ENCODE measurements at regions of chr6 and their contacts with region 1.

Region 1: DNA sequence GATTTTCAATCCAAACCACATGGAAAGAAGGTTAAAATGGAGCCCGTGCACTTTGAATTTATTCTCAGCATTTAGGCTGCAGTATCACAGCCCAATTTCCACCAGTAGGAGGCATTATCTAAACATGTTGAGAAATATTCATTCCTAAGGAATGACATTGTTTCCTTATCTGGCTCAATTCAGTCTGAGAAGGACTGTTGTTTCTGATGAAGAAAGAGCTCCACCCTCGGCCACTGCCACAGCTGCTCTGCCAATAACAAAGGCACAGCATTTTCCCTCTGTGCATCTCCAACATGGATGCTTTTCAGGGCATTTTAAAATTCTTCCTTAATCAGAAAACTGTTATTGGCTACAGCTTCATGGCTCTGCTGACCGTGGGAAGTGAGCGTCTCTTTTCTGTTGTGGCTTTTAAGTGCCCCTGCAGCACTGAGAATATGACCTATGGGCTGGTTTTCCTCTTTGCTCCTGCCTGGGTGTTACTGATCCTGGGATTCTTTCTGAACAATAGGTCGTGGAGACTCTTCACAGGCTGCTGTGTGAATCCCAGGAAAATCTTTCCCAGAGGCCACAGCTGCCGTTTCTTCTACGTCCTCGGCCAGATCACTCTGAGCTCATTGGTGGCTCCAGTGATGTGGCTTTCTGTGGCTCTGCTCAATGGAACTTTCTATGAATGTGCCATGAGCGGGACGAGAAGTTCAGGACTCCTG is at the start of gene CALHM5:
- H3K4me3 ChIP-seq: peak within 1 kb of the TSS; percentile 27
- H3K27ac ChIP-seq: peak within 1 kb of the TSS; percentile 28
- H3K4me1 ChIP-seq: peaks cover 13% of the 10 kb centered on the region
- CTCF ChIP-seq: peak; percentile 50

Region 2: GRCh38 chr6:116492331-116493067 is 19.1 kb before region 1 on chr6:
- CTCF ChIA-PET with region 1: interaction called, 20 read pairs
- POLR2A ChIA-PET with region 1: no interaction called
- H3K4me3 ChIP-seq: no peak overlapping the region
- H3K27ac ChIP-seq: no peak overlapping the region
- H3K4me1 ChIP-seq: no peaks in the 10 kb centered on the region
- CTCF ChIP-seq: no peak

Region 3: DNA sequence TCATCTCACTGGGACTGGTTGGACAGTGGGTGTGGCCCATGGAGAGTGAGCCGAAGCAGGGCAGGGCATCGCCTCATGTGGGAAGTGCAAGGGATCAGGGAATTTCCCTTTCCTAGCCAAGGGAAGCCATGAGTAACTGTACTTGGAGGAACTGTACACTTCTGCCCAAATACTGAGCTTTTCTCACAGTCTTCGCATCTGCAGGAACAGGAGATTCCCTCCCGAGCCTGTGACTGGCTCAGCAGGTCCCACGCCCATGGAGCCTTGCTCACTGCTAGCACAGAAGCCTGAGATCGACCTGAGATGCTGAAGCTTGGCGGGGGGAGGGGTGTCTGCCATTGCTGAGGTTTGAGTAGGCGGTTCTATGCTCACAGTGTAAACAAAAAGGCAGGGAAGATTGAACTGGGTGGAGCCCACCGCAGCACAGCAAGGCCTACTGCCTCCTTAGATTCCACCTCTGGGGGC is 10.6 kb before region 1 on chr6:
- CTCF ChIA-PET with region 1: interaction called, 37 read pairs
- POLR2A ChIA-PET with region 1: interaction called, 4 read pairs
- H3K4me3 ChIP-seq: peak overlapping the region; percentile 25
- H3K27ac ChIP-seq: no peak overlapping the region; the same call in 1 of the 2 replicates
- H3K4me1 ChIP-seq: no peaks in the 10 kb centered on the region; the same call in 1 of the 2 replicates
- CTCF ChIP-seq: no peak

Region 4: DNA sequence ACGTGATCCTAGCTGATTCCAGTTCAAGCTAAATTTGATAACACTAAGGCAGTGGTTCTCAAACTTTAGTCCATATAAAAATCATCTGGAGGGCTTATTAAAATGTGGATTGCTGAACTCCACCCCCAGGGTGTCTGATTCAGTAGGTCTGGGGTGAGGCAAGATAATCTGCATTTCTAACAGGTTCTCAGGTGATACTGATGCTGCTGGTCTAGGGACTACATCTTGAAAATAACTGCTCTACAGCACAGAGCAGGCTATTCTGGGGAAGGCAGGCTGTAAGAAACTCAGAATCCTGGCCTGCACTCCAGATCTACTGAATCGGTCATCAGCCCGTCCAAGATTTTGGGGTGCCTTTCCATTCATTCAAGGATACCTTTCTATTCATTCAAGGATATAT is 11.3 kb after region 1 on chr6:
- CTCF ChIA-PET with region 1: interaction called, 22 read pairs
- POLR2A ChIA-PET with region 1: no interaction called
- H3K4me3 ChIP-seq: no peak overlapping the region
- H3K27ac ChIP-seq: no peak overlapping the region
- H3K4me1 ChIP-seq: peaks cover 14% of the 10 kb centered on the region
- CTCF ChIP-seq: no peak

Region 5: GRCh38 chr6:116542426-116542825 is 30.9 kb after region 1 on chr6:
- CTCF ChIA-PET with region 1: interaction called, 10 read pairs
- POLR2A ChIA-PET with region 1: no interaction called
- H3K4me3 ChIP-seq: no peak overlapping the region
- H3K27ac ChIP-seq: no peak overlapping the region
- H3K4me1 ChIP-seq: no peaks in the 10 kb centered on the region
- CTCF ChIP-seq: no peak

Region 6: DNA sequence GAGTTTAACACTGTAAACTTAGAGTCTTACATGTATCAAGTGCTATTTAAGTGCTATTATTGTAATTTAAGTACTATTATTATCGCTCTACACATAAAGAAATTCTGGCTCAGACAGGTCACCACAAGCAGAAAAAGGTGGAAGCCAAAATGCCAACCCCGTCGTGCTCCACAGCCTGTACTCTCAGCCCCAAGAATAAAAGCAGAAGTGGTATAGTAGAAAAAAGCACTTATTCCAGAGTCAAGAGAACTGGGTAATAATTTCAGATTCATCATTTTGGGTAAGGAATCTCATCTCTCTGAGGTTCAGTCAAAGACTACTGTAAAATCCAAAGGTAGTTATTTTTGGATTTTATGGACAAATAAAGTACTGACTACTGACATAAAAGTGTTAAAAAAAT is 156.1 kb after region 1 on chr6:
- CTCF ChIA-PET with region 1: no interaction called
- POLR2A ChIA-PET with region 1: no interaction called
- H3K4me3 ChIP-seq: peak overlapping the region; percentile 76
- H3K27ac ChIP-seq: peak overlapping the region; percentile 76
- H3K4me1 ChIP-seq: peaks cover 7% of the 10 kb centered on the region
- CTCF ChIP-seq: no peak

Measured in HEK293 (cell line).